ENCODE measurements at regions of chr19 and their contacts with region 1.

Region 1: GRCh38 chr19:41276231-41276630 is 12.1 kb downstream of the HNRNPUL1 start:
- DNase-seq: no peak

Region 2: DNA sequence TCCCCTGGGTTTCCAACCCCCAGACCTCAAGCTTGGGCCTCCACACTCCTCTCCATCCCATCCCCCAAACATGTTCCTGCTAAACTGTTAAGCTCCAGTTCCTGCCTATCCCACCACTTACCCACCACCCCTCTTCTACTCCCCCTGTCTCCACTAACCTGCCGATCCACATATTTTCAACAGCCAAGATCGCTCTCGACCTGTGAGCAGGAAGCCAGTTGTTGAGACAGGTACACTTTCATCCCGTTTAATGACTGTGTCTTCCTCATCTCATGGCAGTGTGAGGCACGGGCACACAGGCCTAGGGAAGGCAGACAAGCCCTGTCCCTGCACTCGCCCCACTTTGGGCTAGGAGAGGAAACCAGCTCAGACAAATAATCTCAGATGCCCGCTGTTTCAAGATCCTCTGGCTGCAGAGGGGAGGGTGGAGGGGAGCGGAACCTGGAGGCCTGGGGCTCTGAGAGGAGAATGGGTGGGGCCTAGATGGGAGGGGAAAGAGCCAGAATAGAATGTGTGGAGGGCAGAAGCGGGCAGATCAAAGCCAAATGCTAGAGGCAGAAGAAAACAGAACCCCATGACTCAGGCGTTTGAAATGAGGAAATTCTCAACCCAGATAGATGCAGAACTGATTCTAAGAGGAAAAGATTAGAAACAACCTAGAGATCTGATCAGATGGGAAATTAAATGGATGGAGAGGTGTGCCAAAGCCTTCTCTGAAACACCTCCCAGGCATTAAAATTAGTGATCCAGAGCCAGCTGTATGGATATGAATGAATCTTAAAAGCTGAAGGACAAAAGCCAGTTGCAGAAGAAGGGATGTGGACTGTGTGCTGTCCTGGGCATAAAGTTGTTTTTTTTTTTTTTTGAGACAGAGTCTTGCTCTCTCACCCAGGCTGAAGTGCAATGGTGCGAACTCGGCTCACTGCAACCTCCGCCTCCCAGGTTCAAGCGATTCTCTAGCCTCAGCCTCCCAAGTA is 100.1 kb before region 1 on chr19:
- in situ Hi-C with region 1: loop called (anchors 10 kb)
- DNase-seq: peak; percentile 95

Measured in Caki2 (cell line).